CD4-positive, alpha-beta memory T cell (primary cell): ENCODE measurements at regions of chr3 and their contacts with region 1.

Region 1: GRCh38 chr3:134485718-134486576 is at the starts of genes ANAPC13 and CEP63:
- DNase-seq: peak; percentile 95 to 98 (median 96)
- H3K4me3 ChIP-seq: peak within 1 kb of the TSS; percentile 92 to 95
- H3K4me3 Mint-ChIP-seq: peak within 1 kb of the TSS; percentile 94 to 100 (median 99)
- H3K27ac ChIP-seq: peak within 1 kb of the TSS; percentile 88
- H3K27ac Mint-ChIP-seq: peak within 1 kb of the TSS; percentile 97 to 100 (median 99)
- H3K4me1 ChIP-seq: peaks cover 31% of the 10 kb centered on the region
- H3K4me1 Mint-ChIP-seq: peaks cover 29 to 64% (median 45%) of the 10 kb centered on the region in 4 donors
- H3K27me3 ChIP-seq: no peaks in the 10 kb centered on the region
- H3K27me3 Mint-ChIP-seq: no peaks in the 10 kb centered on the region
- total RNA-seq, gene ANAPC13: 40.9 to 41.1 TPM
- total RNA-seq, gene CEP63: 31.6 to 40.1 TPM

Region 2: DNA sequence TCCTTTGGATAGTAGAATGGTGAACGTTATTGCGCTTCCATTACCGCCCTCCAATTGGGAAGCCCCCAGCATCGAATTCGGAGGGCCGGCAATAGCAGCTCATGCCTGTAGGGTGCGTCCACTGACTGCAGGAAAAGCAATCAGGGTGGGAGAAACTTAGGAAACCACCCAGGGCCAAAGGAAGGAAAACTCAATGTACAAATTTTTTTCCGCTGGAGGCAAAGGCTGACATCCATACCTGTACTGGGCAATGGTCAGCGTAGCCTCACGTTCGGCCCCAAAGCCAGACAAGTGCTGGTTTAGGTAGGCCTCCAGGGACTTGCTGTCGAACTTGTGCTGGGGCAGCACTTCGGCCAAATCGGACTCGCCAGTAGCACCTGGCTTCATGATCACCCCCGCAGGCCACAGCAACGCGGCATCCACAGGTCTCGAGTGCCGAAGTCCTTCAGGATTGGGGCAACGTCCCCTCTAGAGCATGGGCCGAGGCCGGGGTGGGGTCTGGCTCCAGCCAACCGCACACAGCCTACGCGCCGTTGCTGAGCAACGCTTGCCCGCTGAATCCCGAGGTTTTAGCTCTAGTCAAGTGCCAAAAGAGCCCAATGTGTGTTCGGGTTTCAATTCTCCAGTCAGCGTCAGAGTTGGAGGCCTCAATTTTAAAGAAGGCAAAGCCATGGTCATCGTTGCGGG is 1826.4 kb before region 1 on chr3 and contains the start of gene ACAD11:
- CTCF ChIA-PET with region 1: no interaction called
- POLR2A ChIA-PET with region 1: no interaction called
- intact Hi-C with region 1: loop called (anchors 10 kb)
- DNase-seq: peak; percentile 11 to 48 (median 13)
- H3K4me3 ChIP-seq: peak within 1 kb of the TSS; percentile 78 to 99
- H3K4me3 Mint-ChIP-seq: peak within 1 kb of the TSS; percentile 96 to 99 (median 98)
- H3K27ac ChIP-seq: peak within 1 kb of the TSS; percentile 83
- H3K27ac Mint-ChIP-seq: peak within 1 kb of the TSS; percentile 95 to 98 (median 97)
- H3K4me1 ChIP-seq: peaks cover 53% of the 10 kb centered on the region
- H3K4me1 Mint-ChIP-seq: peaks cover 37 to 71% (median 48%) of the 10 kb centered on the region in 4 donors
- H3K27me3 ChIP-seq: no peaks in the 10 kb centered on the region
- H3K27me3 Mint-ChIP-seq: no peaks in the 10 kb centered on the region
- total RNA-seq, gene ACAD11: 21.6 to 26.9 TPM

Region 3: DNA sequence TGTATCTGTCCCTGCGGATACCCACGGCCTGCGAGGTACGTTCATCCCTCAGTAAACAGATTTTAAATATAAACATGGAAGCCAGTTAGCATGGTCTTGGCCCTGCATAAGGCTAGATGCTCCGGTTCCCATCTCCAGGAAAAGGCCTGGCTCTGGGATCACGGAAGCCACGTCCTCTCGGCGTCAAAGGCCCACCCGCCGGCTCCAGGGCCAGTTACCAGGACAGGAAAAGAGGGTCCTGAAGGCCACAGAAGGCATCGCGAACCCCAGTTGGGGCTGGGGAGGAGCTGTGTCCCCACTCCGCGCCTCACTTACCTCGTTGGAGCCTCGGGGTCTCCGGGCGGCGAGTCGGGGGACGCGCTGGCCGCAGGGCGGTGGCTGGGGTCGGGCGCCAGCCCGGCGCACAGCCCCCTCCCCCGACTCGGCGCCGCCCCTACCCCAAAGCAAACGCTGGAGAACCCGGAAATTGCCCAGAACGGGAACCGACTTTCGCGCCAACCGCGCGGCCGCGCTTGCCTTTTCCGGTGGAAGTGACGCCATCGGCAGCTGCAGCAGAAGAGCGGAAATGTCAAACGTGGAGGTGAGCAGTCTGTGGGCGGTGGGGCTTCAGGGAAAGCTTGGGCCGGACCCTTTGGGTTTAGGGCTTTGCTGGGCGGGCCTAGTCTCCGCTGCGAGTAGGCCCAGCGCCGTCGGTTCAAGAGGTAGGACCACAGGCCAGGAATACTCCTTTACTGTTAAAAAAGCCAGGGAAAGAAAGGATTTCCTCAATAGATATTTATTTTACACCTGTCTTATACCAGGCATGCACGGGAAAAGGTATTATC is 824.3 kb before region 1 on chr3 and contains the start of gene TOPBP1:
- CTCF ChIA-PET with region 1: no interaction called
- POLR2A ChIA-PET with region 1: no interaction called
- intact Hi-C with region 1: loop called (anchors 5 kb)
- DNase-seq: peak; percentile 81 to 90 (median 85)
- H3K4me3 ChIP-seq: peak within 1 kb of the TSS; percentile 78 to 99
- H3K4me3 Mint-ChIP-seq: peak within 1 kb of the TSS; percentile 98 to 99 (median 98)
- H3K27ac ChIP-seq: peak within 1 kb of the TSS; percentile 81
- H3K27ac Mint-ChIP-seq: peak within 1 kb of the TSS; percentile 98 to 99 (median 99)
- H3K4me1 ChIP-seq: peaks cover 32% of the 10 kb centered on the region
- H3K4me1 Mint-ChIP-seq: peaks cover 29 to 52% (median 40%) of the 10 kb centered on the region in 4 donors
- H3K27me3 ChIP-seq: no peaks in the 10 kb centered on the region
- H3K27me3 Mint-ChIP-seq: no peaks in the 10 kb centered on the region
- total RNA-seq, gene TOPBP1: 42.0 to 43.2 TPM

Region 4: GRCh38 chr3:134212906-134213665 is 272.9 kb before region 1 on chr3:
- CTCF ChIA-PET with region 1: interaction called, 20 read pairs
- POLR2A ChIA-PET with region 1: interaction called, 4 read pairs
- intact Hi-C with region 1: no loop called
- DNase-seq: peak; percentile 67 to 78 (median 73)
- H3K4me3 ChIP-seq: no peak overlapping the region
- H3K4me3 Mint-ChIP-seq: no peak overlapping the region
- H3K27ac ChIP-seq: no peak overlapping the region
- H3K27ac Mint-ChIP-seq: peak overlapping the region in 6 of 7 donors; percentile 5 to 84 (median 38)
- H3K4me1 ChIP-seq: no peaks in the 10 kb centered on the region
- H3K4me1 Mint-ChIP-seq: peaks cover 15 to 28% (median 25%) of the 10 kb centered on the region in 4 donors
- H3K27me3 ChIP-seq: no peaks in the 10 kb centered on the region
- H3K27me3 Mint-ChIP-seq: no peaks in the 10 kb centered on the region

Region 5: DNA sequence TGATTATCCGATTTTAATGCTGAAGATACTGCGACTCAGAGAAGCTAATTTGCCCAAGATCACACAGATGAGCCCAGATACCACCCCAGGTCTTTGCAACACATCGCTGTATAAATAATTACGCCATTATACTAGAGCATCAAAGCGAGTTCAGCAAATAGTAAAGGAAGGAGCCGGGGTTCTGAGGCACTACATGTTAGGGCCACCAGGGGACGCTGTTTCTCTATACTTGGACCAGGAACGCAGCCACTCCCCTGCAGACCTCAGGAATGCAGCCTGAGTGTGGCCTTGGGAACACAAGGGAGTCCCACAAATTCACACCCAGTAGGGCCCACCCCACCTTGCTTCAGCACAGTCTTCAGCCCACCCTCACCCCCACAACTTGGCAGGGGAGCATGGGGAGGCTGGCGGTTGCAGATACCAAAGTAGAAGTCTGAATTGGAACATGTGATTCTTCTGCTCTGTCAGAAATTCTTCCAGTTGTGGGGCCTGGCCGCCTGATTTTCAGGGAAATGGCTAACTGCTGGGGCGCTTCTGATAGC is 177.5 kb before region 1 on chr3:
- CTCF ChIA-PET with region 1: interaction called, 12 read pairs
- POLR2A ChIA-PET with region 1: no interaction called
- intact Hi-C with region 1: no loop called
- DNase-seq: peak; percentile 68 to 74 (median 71)
- H3K4me3 ChIP-seq: no peak overlapping the region
- H3K4me3 Mint-ChIP-seq: peak overlapping the region in 4 of 8 donors; percentile 3 to 70 (median 67)
- H3K27ac ChIP-seq: no peak overlapping the region
- H3K27ac Mint-ChIP-seq: no peak overlapping the region
- H3K4me1 ChIP-seq: peaks cover under 1% of the 10 kb centered on the region
- H3K4me1 Mint-ChIP-seq: peaks cover 2 to 7% (median 3%) of the 10 kb centered on the region in 4 donors
- H3K27me3 ChIP-seq: peaks cover 5% of the 10 kb centered on the region
- H3K27me3 Mint-ChIP-seq: peaks cover 21% of the 10 kb centered on the region in 2 donors

Region 6: DNA sequence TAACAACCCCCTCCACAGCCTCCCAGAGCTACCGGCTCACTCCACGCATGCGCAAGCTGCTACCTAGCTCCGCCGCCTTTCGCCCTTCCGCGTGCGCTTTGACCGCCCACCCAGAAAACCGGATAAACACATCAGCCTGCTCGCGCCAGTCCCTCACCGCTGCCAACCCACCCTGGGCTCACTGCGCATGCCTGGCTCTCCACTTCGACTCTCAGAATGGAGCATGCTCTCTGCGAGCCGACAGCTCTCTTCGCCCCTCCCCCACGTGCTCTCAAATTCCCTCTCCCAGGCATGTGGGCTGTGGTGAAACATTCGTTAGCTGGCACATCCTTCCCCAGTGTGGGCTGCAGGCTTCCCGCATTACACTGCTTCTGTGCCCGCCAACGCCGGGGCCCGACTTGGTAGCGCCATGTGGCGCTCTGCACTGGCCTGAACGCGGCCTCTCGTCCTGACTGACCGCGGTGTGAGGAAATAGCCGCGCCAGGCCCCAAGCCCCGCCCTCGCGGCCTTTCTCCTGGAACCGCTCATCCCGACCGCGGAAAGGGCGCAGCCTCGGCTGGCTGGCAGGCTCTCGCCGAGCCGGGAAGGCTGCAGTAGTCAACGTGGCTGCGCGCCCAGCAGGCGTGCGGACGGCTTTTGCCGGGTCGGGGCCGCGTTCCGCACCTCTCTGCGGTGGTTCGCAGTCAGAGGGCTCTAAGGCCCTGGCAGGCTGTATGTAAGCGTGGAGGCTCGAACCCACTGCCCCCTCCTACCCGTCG is 1710.6 kb after region 1 on chr3:
- CTCF ChIA-PET with region 1: no interaction called
- POLR2A ChIA-PET with region 1: no interaction called
- intact Hi-C with region 1: loop called (anchors 5 kb)
- DNase-seq: peak; percentile 97 to 98 (median 97)
- H3K4me3 ChIP-seq: peak overlapping the region; percentile 66 to 71
- H3K4me3 Mint-ChIP-seq: peak overlapping the region; percentile 94 to 100 (median 99)
- H3K27ac ChIP-seq: peak overlapping the region; percentile 97
- H3K27ac Mint-ChIP-seq: peak overlapping the region; percentile 98 to 100 (median 100)
- H3K4me1 ChIP-seq: peaks cover 26% of the 10 kb centered on the region
- H3K4me1 Mint-ChIP-seq: peaks cover 24 to 52% (median 34%) of the 10 kb centered on the region in 4 donors
- H3K27me3 ChIP-seq: no peaks in the 10 kb centered on the region
- H3K27me3 Mint-ChIP-seq: peaks cover 3 to 9% of the 10 kb centered on the region in 2 donors